ENCODE measurements at regions of chr7 and their contacts with region 1.

Region 1: GRCh38 chr7:88919478-88920131 is 124.1 kb upstream of the TEX47 start:
- DNase-seq: no peak
- H3K4me3 Mint-ChIP-seq: no peak overlapping the region
- H3K27ac Mint-ChIP-seq: no peak overlapping the region
- H3K4me1 Mint-ChIP-seq: no peaks in the 10 kb centered on the region
- H3K27me3 Mint-ChIP-seq: no peaks in the 10 kb centered on the region
- CTCF ChIP-seq: no peak

Region 2: DNA sequence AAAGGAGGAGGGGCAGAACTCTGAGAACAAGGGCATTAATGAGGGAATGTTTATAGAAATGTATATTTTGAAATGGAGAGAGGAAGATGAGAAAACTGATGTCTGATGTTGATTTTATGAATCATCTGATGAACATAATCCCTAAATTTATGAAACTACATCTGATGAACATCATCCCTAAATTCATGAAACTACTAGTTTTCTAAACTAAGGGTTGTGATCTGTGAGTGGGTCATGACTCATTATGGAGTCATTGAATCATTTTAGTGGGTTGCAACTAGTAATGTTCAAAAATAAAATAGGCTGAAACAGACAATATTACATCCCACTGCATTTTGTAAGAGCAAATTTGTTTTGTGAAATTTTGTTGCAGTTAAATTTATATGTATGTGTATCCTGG is 318.6 kb after region 1 on chr7:
- CTCF ChIA-PET with region 1: no interaction called
- intact Hi-C with region 1: loop called (anchors 5 kb)
- DNase-seq: no peak
- H3K4me3 Mint-ChIP-seq: no peak overlapping the region
- H3K27ac Mint-ChIP-seq: no peak overlapping the region
- H3K4me1 Mint-ChIP-seq: no peaks in the 10 kb centered on the region
- H3K27me3 Mint-ChIP-seq: no peaks in the 10 kb centered on the region
- CTCF ChIP-seq: no peak

Measured in Calu3 (cell line).